A673 (cell line): ENCODE measurements at regions of chr2 and their contacts with region 1.

Region 1: DNA sequence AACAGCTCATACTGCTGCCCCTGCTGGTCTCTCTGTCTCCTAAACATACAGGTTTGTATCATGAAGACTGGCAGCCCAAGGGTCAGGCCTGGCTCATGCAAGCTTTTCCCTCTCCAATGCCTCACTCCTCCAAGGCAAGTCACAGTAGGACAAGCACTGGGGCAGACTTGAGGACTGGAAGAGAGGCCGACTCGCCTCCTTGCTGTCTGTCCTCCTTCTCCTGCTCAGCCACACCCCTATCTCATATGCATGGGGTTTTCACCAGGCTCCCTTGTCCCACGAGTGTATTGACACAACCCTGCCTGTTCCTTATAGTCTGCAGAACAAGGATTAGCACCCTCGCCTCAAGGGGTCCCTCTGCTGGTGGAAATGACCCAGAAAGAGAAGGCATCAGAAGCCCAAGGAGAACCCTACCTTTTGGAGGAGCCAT is 223.7 kb downstream of the SOX11 start:
- DNase-seq: peak; percentile 79
- H3K4me3 ChIP-seq: no peak overlapping the region
- H3K27ac ChIP-seq: no peak overlapping the region
- H3K4me1 ChIP-seq: peaks cover 19% of the 10 kb centered on the region
- H3K27me3 ChIP-seq: no peaks in the 10 kb centered on the region
- CTCF ChIP-seq: peak; percentile 67

Region 2: GRCh38 chr2:6791679-6792078 is 875.8 kb after region 1 on chr2:
- CTCF ChIA-PET with region 1: interaction called, 10 read pairs
- POLR2A ChIA-PET with region 1: no interaction called
- intact Hi-C with region 1: no loop called
- DNase-seq: no peak
- H3K4me3 ChIP-seq: no peak overlapping the region
- H3K27ac ChIP-seq: no peak overlapping the region
- H3K4me1 ChIP-seq: no peaks in the 10 kb centered on the region
- H3K27me3 ChIP-seq: no peaks in the 10 kb centered on the region
- CTCF ChIP-seq: no peak